GM12878 (cell line): ENCODE measurements at regions of chr3 and their contacts with region 1.

Region 1: GRCh38 chr3:45881078-45882022 is 5.0 kb upstream of the CCR9 start:
- DNase-seq: no peak
- ATAC-seq: peak; percentile 70
- H3K4me3 ChIP-seq: no peak overlapping the region
- H3K27ac ChIP-seq: 0 out of 2 replicates have a peak overlapping the region, but pooled peaks have one; percentile 28
- H3K4me1 ChIP-seq: peaks cover 42% of the 10 kb centered on the region
- H3K27me3 ChIP-seq: peaks cover 0 to 3% of the 10 kb centered on the region in 2 experiments; a peak in 1 of 4 replicates
- CTCF ChIP-seq: no peak
- EP300 ChIP-seq: peak; percentile 78 to 82; a peak in 3 of 4 replicates
- POLR2A ChIP-seq: peak; percentile 56; the same call in 1 of the 2 replicates
- RAD21 ChIP-seq: 0 out of 2 replicates have a peak, but pooled peaks have one; percentile 4

Region 2: GRCh38 chr3:45852828-45853227 is 28.5 kb before region 1 on chr3:
- CTCF ChIA-PET with region 1: interaction called, 3 read pairs
- POLR2A ChIA-PET with region 1: interaction called, 4 read pairs
- RAD21 ChIA-PET with region 1: interaction called, 7 read pairs
- SMC1A ChIA-PET with region 1: interaction called, 59 read pairs
- in situ Hi-C with region 1: no loop called
- intact Hi-C with region 1: no loop called
- DNase-seq: peak; percentile 9
- ATAC-seq: peak; percentile 78
- H3K4me3 ChIP-seq: no peak overlapping the region
- H3K27ac ChIP-seq: no peak overlapping the region
- H3K4me1 ChIP-seq: peaks cover 27% of the 10 kb centered on the region
- H3K27me3 ChIP-seq: no peaks in the 10 kb centered on the region
- CTCF ChIP-seq: no peak
- EP300 ChIP-seq: peak in 1 of 2 experiments; percentile 44; a peak in 1 of 4 replicates
- POLR2A ChIP-seq: no peak
- RAD21 ChIP-seq: peak; percentile 25; the same call in 1 of the 2 replicates

Region 3: GRCh38 chr3:45864760-45865519 is 16.4 kb before region 1 on chr3:
- CTCF ChIA-PET with region 1: interaction called, 23 read pairs
- POLR2A ChIA-PET with region 1: interaction called, 95 read pairs
- RAD21 ChIA-PET with region 1: interaction called, 89 read pairs
- SMC1A ChIA-PET with region 1: interaction called, 161 read pairs
- in situ Hi-C with region 1: no loop called
- intact Hi-C with region 1: loop called (anchors 1 kb)
- DNase-seq: peak; percentile 71
- ATAC-seq: peak; percentile 84
- H3K4me3 ChIP-seq: no peak overlapping the region
- H3K27ac ChIP-seq: peak overlapping the region; percentile 90
- H3K4me1 ChIP-seq: peaks cover 71% of the 10 kb centered on the region
- H3K27me3 ChIP-seq: no peaks in the 10 kb centered on the region; a peak in 2 of 4 replicates
- CTCF ChIP-seq: no peak
- EP300 ChIP-seq: peak; percentile 99
- POLR2A ChIP-seq: no peak; the same call in 1 of the 2 replicates
- RAD21 ChIP-seq: peak; percentile 35

Region 4: GRCh38 chr3:45870099-45870498 is 11.3 kb before region 1 on chr3:
- CTCF ChIA-PET with region 1: interaction called, 8 read pairs
- POLR2A ChIA-PET with region 1: interaction called, 95 read pairs
- RAD21 ChIA-PET with region 1: interaction called, 89 read pairs
- SMC1A ChIA-PET with region 1: interaction called, 161 read pairs
- in situ Hi-C with region 1: no loop called
- intact Hi-C with region 1: loop called (anchors 1 kb)
- DNase-seq: no peak
- ATAC-seq: peak; percentile 64
- H3K4me3 ChIP-seq: no peak overlapping the region
- H3K27ac ChIP-seq: no peak overlapping the region
- H3K4me1 ChIP-seq: peaks cover 43% of the 10 kb centered on the region
- H3K27me3 ChIP-seq: no peaks in the 10 kb centered on the region; a peak in 1 of 4 replicates
- CTCF ChIP-seq: no peak
- EP300 ChIP-seq: peak in 1 of 2 experiments; percentile 62; a peak in 2 of 4 replicates
- POLR2A ChIP-seq: no peak
- RAD21 ChIP-seq: no peak

Region 5: DNA sequence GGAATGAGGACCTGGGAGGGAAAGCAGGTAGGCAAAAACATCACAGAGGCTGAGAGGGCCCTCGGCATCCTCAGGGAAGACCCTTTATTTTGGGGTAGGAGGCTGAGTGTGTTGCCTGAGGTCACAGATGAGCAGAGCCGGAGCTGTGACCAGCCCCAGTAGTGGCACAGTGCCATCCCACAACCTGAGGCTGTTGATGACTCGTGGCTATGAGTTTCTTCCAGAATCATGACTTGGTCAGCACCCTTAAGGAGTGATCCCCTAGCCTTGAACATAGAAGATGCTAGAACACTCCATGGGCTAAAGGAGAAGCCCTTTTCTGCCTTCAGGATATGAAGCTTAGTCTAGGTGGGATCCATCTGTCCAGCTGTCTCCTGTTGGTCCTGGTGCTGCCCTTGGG is 42.4 kb after region 1 on chr3:
- CTCF ChIA-PET with region 1: interaction called, 7 read pairs
- POLR2A ChIA-PET with region 1: interaction called, 3 read pairs
- RAD21 ChIA-PET with region 1: interaction called, 18 read pairs
- SMC1A ChIA-PET with region 1: interaction called, 8 read pairs
- in situ Hi-C with region 1: no loop called
- intact Hi-C with region 1: no loop called
- DNase-seq: no peak
- ATAC-seq: no peak
- H3K4me3 ChIP-seq: no peak overlapping the region
- H3K27ac ChIP-seq: no peak overlapping the region
- H3K4me1 ChIP-seq: no peaks in the 10 kb centered on the region; the same call in 1 of the 2 replicates
- H3K27me3 ChIP-seq: no peaks in the 10 kb centered on the region
- CTCF ChIP-seq: no peak
- EP300 ChIP-seq: no peak
- POLR2A ChIP-seq: no peak
- RAD21 ChIP-seq: no peak

Region 6: GRCh38 chr3:46154311-46154710 is 273.0 kb after region 1 on chr3:
- CTCF ChIA-PET with region 1: no interaction called
- POLR2A ChIA-PET with region 1: no interaction called
- RAD21 ChIA-PET with region 1: no interaction called
- SMC1A ChIA-PET with region 1: no interaction called
- in situ Hi-C with region 1: no loop called
- intact Hi-C with region 1: no loop called
- DNase-seq: no peak
- ATAC-seq: no peak
- H3K4me3 ChIP-seq: no peak overlapping the region
- H3K27ac ChIP-seq: no peak overlapping the region
- H3K4me1 ChIP-seq: no peaks in the 10 kb centered on the region
- H3K27me3 ChIP-seq: no peaks in the 10 kb centered on the region
- CTCF ChIP-seq: no peak
- EP300 ChIP-seq: no peak
- POLR2A ChIP-seq: no peak
- RAD21 ChIP-seq: no peak